ENCODE measurements at regions of chr19 and their contacts with region 1.

Region 1: DNA sequence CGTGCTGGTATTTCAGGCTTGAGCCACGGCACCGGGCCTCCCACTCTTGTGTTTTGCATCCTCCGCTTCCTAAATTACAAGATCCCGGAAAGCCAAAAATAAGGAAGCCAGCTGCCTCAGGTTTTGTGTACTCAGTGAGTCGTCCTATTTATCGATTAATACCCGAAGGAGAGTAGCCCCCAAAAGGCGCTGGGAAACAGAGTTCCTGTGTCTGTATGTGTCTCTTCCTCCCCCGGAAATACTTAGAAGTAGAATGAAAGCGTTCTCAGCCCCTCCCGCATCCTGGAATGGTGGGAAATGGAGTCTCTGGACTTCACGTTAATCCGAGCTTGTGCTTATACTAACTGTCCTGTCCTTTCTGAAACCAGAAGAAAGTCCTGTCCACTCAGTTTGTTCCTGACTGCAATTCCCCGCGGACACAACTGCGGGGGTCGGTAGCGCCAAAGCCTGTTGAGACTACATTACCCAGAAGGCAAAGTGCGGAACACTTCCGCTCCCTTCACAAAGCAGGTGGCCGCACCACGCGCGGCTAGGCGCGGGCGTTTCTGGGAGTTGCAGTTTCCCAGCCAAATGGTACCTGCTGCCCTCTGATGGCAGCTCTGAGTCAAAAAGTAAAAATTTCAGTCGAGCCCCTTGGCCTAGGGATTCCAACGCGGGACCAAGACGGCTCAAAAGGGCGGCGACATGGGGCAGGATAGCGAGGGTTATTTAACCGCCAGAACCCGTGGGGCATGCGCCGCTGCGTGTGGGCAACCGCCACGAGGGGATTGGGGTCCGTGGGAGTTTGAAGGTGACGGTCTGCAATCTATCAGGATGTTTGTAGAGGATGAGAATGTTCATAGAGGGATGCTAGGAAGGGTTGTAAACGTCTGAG is 2.2 kb upstream of the GSK3A start:
- DNase-seq: peak; percentile 89 to 99 (median 92)

Region 2: DNA sequence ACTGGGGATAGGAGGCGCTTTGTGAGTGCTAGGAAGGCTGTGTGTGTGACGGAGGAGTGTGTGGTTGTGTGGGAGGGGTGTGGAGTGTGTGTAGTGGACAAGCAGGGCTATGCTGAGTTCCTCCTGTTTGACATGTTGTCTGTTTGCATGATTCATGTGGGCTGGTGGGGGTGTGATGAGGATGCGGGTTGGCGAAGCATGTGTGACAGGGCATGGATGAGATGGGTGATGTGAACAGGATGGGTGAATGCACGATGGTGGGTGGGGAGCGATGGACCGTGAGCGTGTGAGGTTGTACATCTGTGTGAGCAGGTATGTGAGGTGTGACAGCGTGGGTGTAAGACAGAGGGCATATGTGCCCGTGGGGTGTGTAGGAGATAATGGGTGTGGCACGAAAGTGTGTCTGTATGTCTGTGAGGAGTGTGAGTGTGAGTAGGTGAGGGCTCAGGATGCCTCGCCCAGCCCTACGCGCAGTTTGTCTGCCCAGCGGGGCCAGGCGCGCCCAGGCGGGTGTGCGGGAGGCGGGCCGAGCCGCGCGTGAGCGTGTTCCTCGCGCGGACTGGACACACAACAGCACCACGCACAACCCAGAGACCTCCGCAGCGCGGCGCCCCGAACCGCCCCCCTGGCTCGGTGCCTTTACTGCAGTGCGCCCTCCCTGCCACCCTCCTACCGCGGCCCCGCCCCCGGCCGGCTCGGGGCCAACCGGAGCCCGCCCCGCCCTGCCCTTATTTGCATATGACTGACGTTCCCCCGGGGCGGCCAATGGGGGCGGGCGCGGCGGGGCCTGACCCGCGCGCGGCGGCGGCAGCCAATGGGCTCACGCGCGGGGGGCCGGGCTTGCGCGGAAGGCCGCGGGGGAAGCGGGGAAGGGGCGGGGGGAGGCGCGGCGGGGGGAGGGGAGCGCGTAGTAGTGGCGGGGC is 38.8 kb after region 1 on chr19:
- intact Hi-C with region 1: loop called (anchors 1 kb)
- DNase-seq: peak; percentile 87 to 99 (median 96)

Region 3: GRCh38 chr19:42295831-42296525 is 51.4 kb after region 1 on chr19:
- intact Hi-C with region 1: loop called (anchors 5 kb)
- DNase-seq: peak; percentile 66 to 97 (median 88)

Region 4: GRCh38 chr19:42325273-42325895 is 80.8 kb after region 1 on chr19 and contains the start of gene MEGF8:
- intact Hi-C with region 1: loop called (anchors 10 kb)
- DNase-seq: peak; percentile 96 to 100 (median 98)

Region 5: GRCh38 chr19:42378225-42379215 is 133.9 kb after region 1 on chr19:
- intact Hi-C with region 1: no loop called
- DNase-seq: no peak